Heart left ventricle (tissue), 16 donors: ENCODE measurements at regions of chr17 and their contacts with region 1.

Region 1: GRCh38 chr17:56715613-56716357 is 117.9 kb downstream of the C17orf67 start:
- DNase-seq: peak; percentile 72 to 77 (median 74)
- ATAC-seq: peak; percentile 80 to 94 (median 88)
- H3K4me3 ChIP-seq: no peak overlapping the region
- H3K27ac ChIP-seq: no peak overlapping the region
- H3K4me1 ChIP-seq: no peaks in the 10 kb centered on the region
- H3K27me3 ChIP-seq: peaks cover 0 to 14% (median 0%) of the 10 kb centered on the region in 9 donors
- CTCF ChIP-seq: peak; percentile 71 to 92 (median 83)
- POLR2A ChIP-seq: no peak

Region 2: DNA sequence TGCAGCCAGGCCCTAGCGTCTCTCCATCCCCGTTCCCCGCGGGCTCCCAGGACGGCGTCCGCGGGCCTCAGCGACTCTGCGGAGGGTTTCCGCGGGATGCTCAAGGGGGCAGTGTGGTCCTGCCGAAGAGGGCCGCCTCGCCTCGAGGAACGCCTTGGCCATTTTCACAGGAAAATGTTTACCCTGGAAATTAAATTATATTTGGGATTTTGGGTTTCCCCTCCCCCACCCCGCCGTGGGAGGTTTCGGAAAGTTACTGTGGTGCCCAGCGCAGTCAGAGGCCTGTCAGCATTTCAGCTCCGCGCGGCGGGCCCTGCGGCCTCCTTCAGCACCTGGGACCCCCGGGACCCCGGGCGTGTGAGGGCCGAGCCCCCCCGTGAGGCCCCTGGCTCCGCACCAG is 870.4 kb before region 1 on chr17:
- intact Hi-C with region 1: loop called in 7 of 10 experiments (anchors 5 to 10 kb)
- DNase-seq: peak; percentile 27 to 69 (median 49)
- ATAC-seq: peak; percentile 71 to 93 (median 80)
- H3K4me3 ChIP-seq: peak overlapping the region in 9 of 12 donors; percentile 15 to 36 (median 32)
- H3K27ac ChIP-seq: no peak overlapping the region
- H3K4me1 ChIP-seq: peaks cover 0 to 6% (median 0%) of the 10 kb centered on the region in 12 donors
- H3K27me3 ChIP-seq: no peaks in the 10 kb centered on the region
- CTCF ChIP-seq: peak; percentile 33 to 73 (median 56)
- POLR2A ChIP-seq: no peak

Region 3: DNA sequence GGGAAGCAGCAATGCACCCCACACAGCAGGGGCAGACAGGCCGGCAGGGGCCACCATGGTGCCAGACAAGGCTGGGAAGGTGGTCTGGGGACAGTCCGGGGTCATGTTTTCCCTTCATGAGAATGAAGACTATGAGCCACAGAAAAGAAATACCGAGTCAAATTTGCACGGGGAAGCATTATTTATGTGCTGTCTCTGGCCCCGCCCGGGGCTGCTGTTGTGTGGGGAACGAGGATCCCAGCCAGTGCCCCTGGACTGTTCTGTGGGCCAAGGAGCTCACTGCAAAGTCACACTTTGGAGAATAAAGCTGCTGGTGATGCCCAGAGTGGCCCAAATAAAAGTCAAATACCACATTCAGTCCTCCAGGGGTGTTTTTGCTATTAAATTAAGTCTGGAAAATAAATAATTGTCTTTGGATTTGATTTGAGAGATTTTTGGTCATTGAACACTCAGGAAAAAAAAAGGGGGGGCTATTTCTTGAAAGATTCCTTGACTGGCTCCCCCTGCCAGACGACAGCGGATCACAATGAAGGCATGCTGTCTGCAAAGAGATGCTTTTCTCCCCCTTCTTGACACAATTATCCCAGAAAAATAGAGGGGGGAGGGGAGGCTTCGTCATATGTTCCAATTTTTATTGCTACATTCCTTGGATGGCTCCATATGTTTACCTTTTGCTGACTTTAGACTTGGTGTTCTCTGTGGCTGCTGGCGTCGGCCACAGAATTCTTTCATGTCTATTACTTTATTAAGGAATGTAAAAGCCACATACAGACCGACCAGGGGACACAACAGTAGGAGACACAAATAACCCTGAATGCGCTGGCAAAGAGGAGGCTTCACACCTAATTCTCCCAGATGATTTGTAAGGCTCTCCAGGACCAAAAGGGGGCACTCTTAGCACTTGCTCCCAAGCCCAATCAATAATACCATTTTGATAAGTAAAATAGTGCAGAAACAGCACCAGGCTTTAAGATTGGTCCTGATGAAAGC is 589.7 kb before region 1 on chr17:
- intact Hi-C with region 1: loop called in 1 of 10 experiments (anchors 10 kb)
- DNase-seq: no peak
- ATAC-seq: no peak
- H3K4me3 ChIP-seq: no peak overlapping the region
- H3K27ac ChIP-seq: no peak overlapping the region
- H3K4me1 ChIP-seq: no peaks in the 10 kb centered on the region
- H3K27me3 ChIP-seq: peaks cover 0 to 10% (median 0%) of the 10 kb centered on the region in 9 donors
- CTCF ChIP-seq: peak; percentile 11 to 50 (median 29)
- POLR2A ChIP-seq: no peak

Region 4: DNA sequence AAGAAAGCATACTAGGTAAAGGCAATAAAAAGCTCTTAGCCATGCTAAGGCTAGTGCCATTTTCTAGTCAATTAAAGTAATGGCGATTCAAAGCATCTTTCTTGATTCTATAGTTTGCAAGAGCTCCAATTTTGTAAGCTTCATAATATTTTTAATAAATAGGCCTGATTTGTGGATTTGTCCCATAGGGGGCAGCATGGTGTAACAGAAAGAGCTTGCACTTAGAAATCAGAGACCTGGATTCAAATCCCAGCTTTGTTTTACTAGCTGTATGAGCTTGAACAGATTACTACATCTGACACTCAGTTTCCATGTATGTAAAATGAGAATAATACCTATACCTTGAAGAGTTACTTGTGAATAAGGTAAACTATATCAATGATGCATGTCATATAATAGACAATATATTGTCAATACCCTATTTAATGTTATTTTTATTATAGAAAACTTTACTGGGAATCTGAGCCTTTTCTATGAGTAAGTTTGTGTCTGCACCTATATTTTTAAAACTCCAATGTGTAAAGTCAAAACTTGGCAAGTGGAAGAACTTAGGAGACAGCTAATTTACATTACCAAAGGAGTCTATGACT is 215.9 kb before region 1 on chr17:
- intact Hi-C with region 1: loop called in 7 of 10 experiments (anchors 2 to 10 kb)
- DNase-seq: no peak
- ATAC-seq: no peak
- H3K4me3 ChIP-seq: no peak overlapping the region
- H3K27ac ChIP-seq: no peak overlapping the region
- H3K4me1 ChIP-seq: no peaks in the 10 kb centered on the region
- H3K27me3 ChIP-seq: no peaks in the 10 kb centered on the region
- CTCF ChIP-seq: peak in 11 of 12 donors; percentile 11 to 46 (median 42)
- POLR2A ChIP-seq: no peak

Region 5: DNA sequence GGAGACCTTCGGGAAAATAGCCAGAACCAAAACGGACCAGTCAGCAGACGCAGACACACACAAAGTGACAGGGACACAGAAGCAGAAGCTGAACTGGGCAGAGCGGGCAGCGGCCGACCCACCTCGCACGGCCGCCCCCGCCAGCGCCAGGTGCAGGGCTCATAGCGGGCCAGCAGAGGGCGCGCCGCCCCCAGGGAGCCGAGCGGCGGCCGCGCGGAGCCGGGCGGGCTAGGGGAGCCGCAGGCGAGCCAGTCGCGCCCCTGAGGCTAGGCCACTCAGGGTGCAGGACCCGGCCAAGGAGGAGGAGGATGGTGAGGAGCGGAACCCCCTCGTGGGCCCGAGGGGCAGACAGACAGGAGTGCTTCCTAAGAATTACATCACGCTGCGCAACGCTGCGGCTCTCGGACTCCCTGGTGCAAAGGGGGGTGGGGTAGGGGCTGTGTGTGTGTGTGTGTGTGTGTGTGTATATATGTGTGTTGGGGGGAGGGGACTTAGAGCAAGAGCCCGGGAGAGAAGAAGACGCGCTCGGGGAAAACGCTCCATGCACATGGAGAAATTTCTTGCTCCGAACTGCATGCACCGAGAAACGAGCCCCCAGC is 123.2 kb before region 1 on chr17:
- intact Hi-C with region 1: loop called in 9 of 10 experiments (anchors 1 to 2 kb)
- DNase-seq: peak; percentile 35 to 86 (median 59)
- ATAC-seq: peak; percentile 55 to 85 (median 82)
- H3K4me3 ChIP-seq: peak overlapping the region; percentile 42 to 71 (median 56)
- H3K27ac ChIP-seq: no peak overlapping the region
- H3K4me1 ChIP-seq: peaks cover 4 to 56% (median 22%) of the 10 kb centered on the region in 12 donors
- H3K27me3 ChIP-seq: peaks cover 5 to 69% (median 37%) of the 10 kb centered on the region in 9 donors
- CTCF ChIP-seq: peak; percentile 72 to 99 (median 97)
- POLR2A ChIP-seq: no peak

Region 6: GRCh38 chr17:56602292-56603130 is 113.3 kb before region 1 on chr17:
- intact Hi-C with region 1: loop called in 1 of 10 experiments (anchors 5 kb)
- DNase-seq: no peak
- ATAC-seq: no peak
- H3K4me3 ChIP-seq: no peak overlapping the region
- H3K27ac ChIP-seq: no peak overlapping the region
- H3K4me1 ChIP-seq: peaks cover 3 to 8% (median 5%) of the 10 kb centered on the region in 12 donors
- H3K27me3 ChIP-seq: peaks cover 19 to 68% (median 38%) of the 10 kb centered on the region in 9 donors
- CTCF ChIP-seq: no peak
- POLR2A ChIP-seq: no peak